Activated CD4-positive, alpha-beta T cell treated with anti-CD3 and anti-CD28 coated beads for 36 hours (primary cell): ENCODE measurements at regions of chr19 and their contacts with region 1.

Region 1: DNA sequence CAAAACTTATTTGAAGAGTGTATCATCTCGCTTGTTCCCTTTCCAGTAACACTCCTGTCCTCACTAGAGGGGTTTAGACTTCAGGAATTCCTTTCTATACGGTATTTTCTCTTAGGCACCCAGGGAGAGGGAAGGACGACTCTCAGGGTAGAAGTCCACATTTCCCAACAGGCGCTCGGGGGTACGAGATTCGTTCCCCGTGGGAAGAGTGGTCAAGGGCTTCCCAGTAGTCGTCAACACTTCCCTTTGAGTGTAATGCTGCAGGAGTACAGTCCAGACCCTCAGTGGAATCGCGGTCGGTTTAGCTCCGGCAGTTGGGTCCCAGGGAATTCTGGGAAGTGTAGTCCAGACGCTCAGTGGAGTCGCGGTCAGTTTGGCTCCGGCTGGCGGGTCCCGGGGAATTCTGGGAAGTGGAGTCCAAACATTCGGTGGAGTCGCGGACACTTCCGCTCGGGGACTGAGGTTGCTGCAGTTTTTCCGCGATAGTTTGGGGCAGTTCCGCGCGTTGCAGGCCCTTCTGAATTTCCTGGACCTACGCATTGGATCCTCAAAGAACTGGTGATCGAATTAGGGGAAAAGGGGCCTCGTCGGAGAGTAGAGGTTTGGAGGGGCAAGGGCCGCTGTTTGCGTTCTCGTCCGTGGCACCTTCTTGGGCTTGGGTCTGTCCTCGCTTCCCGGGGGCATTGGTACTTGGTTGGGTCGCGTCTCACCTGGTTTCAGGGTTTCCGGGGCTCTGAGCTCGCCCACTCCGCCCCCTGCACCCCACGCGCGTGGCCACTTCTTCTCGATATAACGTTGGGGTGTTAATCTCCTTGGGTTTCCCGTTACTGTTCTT is at the start of gene ZNF224:
- DNase-seq: peak; percentile 92
- ATAC-seq: peak; percentile 93
- H3K4me3 Mint-ChIP-seq: peak within 1 kb of the TSS; percentile 99
- H3K27ac Mint-ChIP-seq: peak within 1 kb of the TSS; percentile 95
- H3K4me1 Mint-ChIP-seq: peaks cover 11% of the 10 kb centered on the region
- H3K27me3 Mint-ChIP-seq: no peaks in the 10 kb centered on the region
- total RNA-seq, gene ZNF224: 12.6 to 13.9 TPM

Region 2: DNA sequence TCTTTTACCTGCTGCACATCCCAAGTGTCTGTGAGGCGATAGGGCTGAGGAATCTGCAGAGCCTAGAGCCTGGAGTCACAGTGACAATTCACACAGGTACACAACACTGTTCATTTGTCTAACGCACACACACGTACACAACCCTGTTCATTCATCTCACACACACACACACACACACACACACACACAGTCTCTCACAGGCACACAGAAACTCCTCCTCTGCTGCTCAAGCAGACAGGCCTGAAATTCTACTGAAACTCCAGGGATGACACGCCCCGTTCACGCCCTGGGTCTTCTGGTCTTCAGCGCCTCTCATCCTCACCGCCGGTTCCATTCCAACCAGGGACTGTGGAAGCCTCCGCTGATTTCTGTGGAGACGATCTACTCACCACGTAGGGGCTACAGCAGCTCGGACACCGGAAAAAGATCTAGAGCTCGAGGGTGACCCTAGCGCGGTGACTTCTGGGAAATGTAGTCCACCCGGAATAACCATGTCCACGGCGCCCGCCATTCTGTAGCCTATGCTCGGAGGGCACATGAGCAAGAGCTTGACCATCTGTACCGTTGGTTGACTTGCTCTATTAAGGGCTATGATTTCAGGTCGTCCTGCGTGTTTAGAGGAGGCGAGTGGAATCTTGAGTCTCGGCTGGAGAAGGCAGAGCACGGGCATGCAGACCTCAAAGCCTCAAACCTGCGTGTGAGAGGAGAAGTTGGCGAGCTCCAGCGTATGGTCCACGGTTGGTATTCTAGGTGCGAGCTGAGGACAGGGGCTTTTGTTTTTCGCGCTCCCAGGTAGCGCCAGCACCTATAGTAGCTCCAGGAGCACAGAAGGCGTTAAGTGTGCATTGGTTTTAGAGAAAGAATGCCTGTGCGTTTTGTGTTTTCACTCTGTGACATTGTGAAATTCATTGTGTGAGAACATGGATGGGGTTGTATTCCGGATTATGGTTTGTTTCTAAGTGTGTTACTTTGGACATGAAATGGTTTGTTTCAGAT is 192.5 kb before region 1 on chr19:
- CTCF ChIA-PET with region 1: no interaction called
- POLR2A ChIA-PET with region 1: no interaction called
- intact Hi-C with region 1: loop called in 1 of 2 experiments (anchors 1 kb)
- DNase-seq: peak; percentile 82
- ATAC-seq: peak; percentile 96
- H3K4me3 Mint-ChIP-seq: peak overlapping the region; percentile 82
- H3K27ac Mint-ChIP-seq: peak overlapping the region; percentile 78
- H3K4me1 Mint-ChIP-seq: peaks cover 19% of the 10 kb centered on the region
- H3K27me3 Mint-ChIP-seq: no peaks in the 10 kb centered on the region

Region 3: GRCh38 chr19:43983912-43984686 is 110.0 kb before region 1 on chr19 and contains the start of gene ZNF155:
- CTCF ChIA-PET with region 1: no interaction called
- POLR2A ChIA-PET with region 1: no interaction called
- intact Hi-C with region 1: loop called in 1 of 2 experiments (anchors 1 kb)
- DNase-seq: peak; percentile 82
- ATAC-seq: peak; percentile 97
- H3K4me3 Mint-ChIP-seq: peak within 1 kb of the TSS; percentile 90
- H3K27ac Mint-ChIP-seq: peak within 1 kb of the TSS; percentile 92
- H3K4me1 Mint-ChIP-seq: peaks cover 11% of the 10 kb centered on the region
- H3K27me3 Mint-ChIP-seq: no peaks in the 10 kb centered on the region
- total RNA-seq, gene ZNF155: 4.5 to 6.0 TPM

Region 4: GRCh38 chr19:44071824-44072542 is 22.2 kb before region 1 on chr19 and contains the start of gene ZNF284:
- CTCF ChIA-PET with region 1: interaction called, 4 read pairs
- POLR2A ChIA-PET with region 1: no interaction called
- intact Hi-C with region 1: loop called in 1 of 2 experiments (anchors 1 kb)
- DNase-seq: peak; percentile 88
- ATAC-seq: peak; percentile 99
- H3K4me3 Mint-ChIP-seq: peak within 1 kb of the TSS; percentile 83
- H3K27ac Mint-ChIP-seq: peak within 1 kb of the TSS; percentile 78
- H3K4me1 Mint-ChIP-seq: peaks cover 23% of the 10 kb centered on the region
- H3K27me3 Mint-ChIP-seq: peaks cover 2% of the 10 kb centered on the region
- total RNA-seq, gene ZNF284: 2.1 TPM

Region 5: DNA sequence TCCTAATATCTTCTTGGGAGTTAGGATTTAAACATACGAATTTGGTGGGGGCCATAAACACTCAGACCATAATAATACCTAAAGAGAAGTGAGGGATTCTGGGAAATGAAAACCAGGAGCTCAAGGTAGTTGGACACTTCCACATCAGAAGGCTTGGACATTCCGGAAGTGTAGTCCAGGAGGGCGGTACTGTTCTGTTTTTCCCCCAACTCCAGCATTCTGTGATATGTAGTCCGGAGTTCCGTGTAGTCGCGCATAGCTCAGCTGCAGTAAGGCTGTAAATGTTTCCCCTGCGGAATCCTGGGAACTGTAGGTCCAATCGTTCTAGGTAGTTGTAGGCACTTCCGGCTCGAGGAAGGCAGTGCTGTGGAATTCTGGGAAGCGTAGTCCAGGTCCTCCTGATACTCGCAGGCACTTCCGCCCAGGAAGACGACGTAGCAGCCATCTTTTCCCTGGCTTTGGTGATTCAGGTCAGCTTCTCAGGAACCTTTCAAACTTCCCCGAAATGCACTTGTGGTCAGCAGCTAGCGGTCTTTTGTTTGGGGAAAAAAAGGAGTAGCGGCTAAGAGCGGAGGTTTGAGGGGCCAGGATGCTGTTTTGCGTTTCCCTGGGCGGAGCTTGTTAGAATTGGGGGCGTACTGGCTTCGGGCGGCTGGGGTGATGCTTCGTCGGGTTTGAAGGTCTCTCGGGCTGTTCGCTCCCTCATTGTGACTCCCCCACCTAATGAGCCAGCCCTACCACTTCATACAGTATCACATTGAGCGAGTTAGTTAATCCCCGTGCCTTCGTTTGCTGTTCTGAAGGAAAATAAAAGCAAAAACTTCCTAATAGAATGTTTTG is 70.7 kb after region 1 on chr19 and contains the start of gene ZNF226:
- CTCF ChIA-PET with region 1: interaction called, 3 read pairs
- POLR2A ChIA-PET with region 1: interaction called, 3 read pairs
- intact Hi-C with region 1: loop called (anchors 1 to 2 kb)
- DNase-seq: peak; percentile 87
- ATAC-seq: peak; percentile 89
- H3K4me3 Mint-ChIP-seq: peak within 1 kb of the TSS; percentile 87
- H3K27ac Mint-ChIP-seq: peak within 1 kb of the TSS; percentile 96
- H3K4me1 Mint-ChIP-seq: peaks cover 30% of the 10 kb centered on the region
- H3K27me3 Mint-ChIP-seq: no peaks in the 10 kb centered on the region
- total RNA-seq, gene ZNF226: 11.3 to 15.2 TPM

Region 6: GRCh38 chr19:44228318-44228717 is 134.2 kb after region 1 on chr19:
- CTCF ChIA-PET with region 1: no interaction called
- POLR2A ChIA-PET with region 1: no interaction called
- intact Hi-C with region 1: no loop called
- DNase-seq: no peak
- ATAC-seq: no peak
- H3K4me3 Mint-ChIP-seq: no peak overlapping the region
- H3K27ac Mint-ChIP-seq: no peak overlapping the region
- H3K4me1 Mint-ChIP-seq: no peaks in the 10 kb centered on the region
- H3K27me3 Mint-ChIP-seq: no peaks in the 10 kb centered on the region

Region 7: GRCh38 chr19:44304659-44305193 is 210.6 kb after region 1 on chr19 and contains the start of gene ZNF235:
- CTCF ChIA-PET with region 1: no interaction called
- POLR2A ChIA-PET with region 1: interaction called, 3 read pairs
- intact Hi-C with region 1: loop called in 1 of 2 experiments (anchors 1 kb)
- DNase-seq: peak; percentile 87
- ATAC-seq: peak; percentile 97
- H3K4me3 Mint-ChIP-seq: peak within 1 kb of the TSS; percentile 83
- H3K27ac Mint-ChIP-seq: peak within 1 kb of the TSS; percentile 64
- H3K4me1 Mint-ChIP-seq: peaks cover 12% of the 10 kb centered on the region
- H3K27me3 Mint-ChIP-seq: no peaks in the 10 kb centered on the region
- total RNA-seq, gene ZNF235: 2.1 to 2.7 TPM

Region 8: GRCh38 chr19:44401139-44402115 is 307.3 kb after region 1 on chr19 and contains the start of gene ZNF285:
- CTCF ChIA-PET with region 1: no interaction called
- POLR2A ChIA-PET with region 1: no interaction called
- intact Hi-C with region 1: no loop called
- DNase-seq: peak; percentile 91
- ATAC-seq: peak; percentile 99
- H3K4me3 Mint-ChIP-seq: peak within 1 kb of the TSS; percentile 75
- H3K27ac Mint-ChIP-seq: peak within 1 kb of the TSS; percentile 76
- H3K4me1 Mint-ChIP-seq: peaks cover 10% of the 10 kb centered on the region
- H3K27me3 Mint-ChIP-seq: no peaks in the 10 kb centered on the region
- total RNA-seq, gene ZNF285: 1.2 to 1.4 TPM